Naive thymus-derived CD4-positive, alpha-beta T cell (primary cell): ENCODE measurements at regions of chr1 and their contacts with region 1.

Region 1: DNA sequence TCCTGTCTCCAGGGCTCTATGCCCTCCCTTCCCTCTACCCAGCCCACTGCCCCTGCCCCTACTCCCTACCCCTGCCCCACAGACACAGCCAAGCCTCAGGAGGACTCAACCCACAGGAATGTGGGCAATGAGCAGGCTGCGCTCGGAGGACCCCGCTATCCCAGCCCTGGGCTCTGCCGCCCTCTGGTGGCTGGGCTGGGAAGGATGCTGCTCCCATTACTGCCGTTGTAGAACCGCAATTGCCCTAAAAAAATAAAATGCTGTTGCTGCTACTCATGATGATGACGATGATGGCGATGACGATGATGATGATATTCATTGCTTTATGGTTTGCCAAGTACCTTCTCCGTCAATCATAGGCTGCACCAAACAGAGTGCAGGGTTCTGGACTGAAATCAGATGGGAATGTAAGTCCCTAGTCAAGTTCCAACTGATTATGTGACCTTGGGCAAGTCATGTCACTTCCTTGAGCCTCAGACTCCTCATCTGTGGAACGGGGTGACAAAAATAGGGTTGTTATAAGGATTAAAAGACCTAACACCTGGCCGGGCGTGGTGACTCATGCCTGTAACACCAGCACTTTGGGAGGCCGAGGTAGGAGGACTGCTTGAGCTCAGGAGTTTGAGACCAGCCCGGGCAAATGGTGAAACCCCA is 24.6 kb downstream of the ARHGEF19 start:
- DNase-seq: peak; percentile 59 to 87 (median 75)
- ATAC-seq: peak; percentile 94
- H3K4me3 ChIP-seq: no peak overlapping the region
- H3K4me3 Mint-ChIP-seq: no peak overlapping the region
- H3K27ac ChIP-seq: no peak overlapping the region
- H3K27ac Mint-ChIP-seq: no peak overlapping the region
- H3K4me1 ChIP-seq: peaks cover 0 to 4% of the 10 kb centered on the region in 2 donors
- H3K4me1 Mint-ChIP-seq: peaks cover 0 to 7% (median 0%) of the 10 kb centered on the region in 7 donors
- H3K27me3 ChIP-seq: no peaks in the 10 kb centered on the region
- H3K27me3 Mint-ChIP-seq: peaks cover 0 to 13% (median 0%) of the 10 kb centered on the region in 5 donors

Region 2: DNA sequence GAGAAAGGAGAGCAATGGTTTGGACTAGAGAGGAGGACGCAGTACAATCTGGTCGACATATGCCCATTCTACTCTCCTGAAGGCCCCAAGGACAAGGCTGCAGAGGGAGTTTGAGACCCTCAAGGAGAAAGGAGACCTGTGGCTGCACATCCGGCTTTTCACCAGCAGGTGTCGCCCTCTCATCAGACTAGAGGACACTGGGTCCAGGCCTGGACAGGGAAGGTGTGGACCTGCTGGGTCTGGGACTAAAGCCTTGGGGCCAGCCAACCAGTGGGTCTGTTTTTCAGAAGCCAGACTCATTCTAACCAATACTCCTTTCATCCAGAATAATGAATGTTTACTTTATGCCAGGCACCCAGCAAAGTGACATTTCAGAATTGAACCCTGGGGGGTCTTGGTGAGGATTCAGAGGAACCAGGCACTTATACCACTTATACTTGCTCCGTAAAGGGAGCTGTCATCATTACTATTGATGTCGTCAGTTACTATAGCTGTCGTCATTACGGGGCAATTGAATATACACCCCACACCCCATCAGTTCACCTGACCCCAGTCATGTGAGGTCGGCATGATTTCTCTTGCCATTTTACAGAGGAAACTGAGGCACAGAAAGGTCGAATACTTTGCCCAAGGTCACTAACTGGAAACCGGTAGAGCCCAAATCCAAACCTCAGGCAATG is 178.7 kb before region 1 on chr1:
- CTCF ChIA-PET with region 1: interaction called, 4 read pairs
- POLR2A ChIA-PET with region 1: no interaction called
- intact Hi-C with region 1: loop called in 1 of 2 experiments (anchors 1 kb)
- DNase-seq: peak; percentile 33 to 74 (median 54)
- ATAC-seq: peak; percentile 73
- H3K4me3 ChIP-seq: no peak overlapping the region
- H3K4me3 Mint-ChIP-seq: no peak overlapping the region
- H3K27ac ChIP-seq: no peak overlapping the region
- H3K27ac Mint-ChIP-seq: no peak overlapping the region
- H3K4me1 ChIP-seq: peaks cover 0 to 6% of the 10 kb centered on the region in 2 donors
- H3K4me1 Mint-ChIP-seq: peaks cover 0 to 21% (median 5%) of the 10 kb centered on the region in 7 donors
- H3K27me3 ChIP-seq: no peaks in the 10 kb centered on the region
- H3K27me3 Mint-ChIP-seq: peaks cover 0 to 17% (median 0%) of the 10 kb centered on the region in 5 donors

Region 3: GRCh38 chr1:16078925-16079656 is 108.8 kb before region 1 on chr1:
- CTCF ChIA-PET with region 1: interaction called, 240 read pairs
- POLR2A ChIA-PET with region 1: interaction called, 3 read pairs
- intact Hi-C with region 1: loop called (anchors 1 kb)
- DNase-seq: peak; percentile 52 to 80 (median 73)
- ATAC-seq: peak; percentile 91
- H3K4me3 ChIP-seq: peak overlapping the region; percentile 40
- H3K4me3 Mint-ChIP-seq: peak overlapping the region; percentile 58 to 86 (median 77)
- H3K27ac ChIP-seq: no peak overlapping the region
- H3K27ac Mint-ChIP-seq: peak overlapping the region in 6 of 9 donors; percentile 10 to 83 (median 40)
- H3K4me1 ChIP-seq: peaks cover 6% of the 10 kb centered on the region in 2 donors
- H3K4me1 Mint-ChIP-seq: peaks cover 6 to 15% (median 10%) of the 10 kb centered on the region in 7 donors
- H3K27me3 ChIP-seq: peaks cover 0 to 4% of the 10 kb centered on the region in 2 donors
- H3K27me3 Mint-ChIP-seq: peaks cover under 1 to 12% (median 5%) of the 10 kb centered on the region in 5 donors

Region 4: GRCh38 chr1:16155532-16156410 is 32.1 kb before region 1 on chr1 and contains the start of gene EPHA2:
- CTCF ChIA-PET with region 1: interaction called, 8 read pairs
- POLR2A ChIA-PET with region 1: interaction called, 9 read pairs
- intact Hi-C with region 1: loop called in 1 of 2 experiments (anchors 2 kb)
- DNase-seq: no peak
- ATAC-seq: peak; percentile 20
- H3K4me3 ChIP-seq: peak within 1 kb of the TSS; percentile 51
- H3K4me3 Mint-ChIP-seq: peak within 1 kb of the TSS; percentile 33 to 86 (median 73)
- H3K27ac ChIP-seq: no peak within 1 kb of the TSS
- H3K27ac Mint-ChIP-seq: peak within 1 kb of the TSS in 6 of 9 donors; percentile 46 to 93 (median 70)
- H3K4me1 ChIP-seq: peaks cover 24 to 38% of the 10 kb centered on the region in 2 donors
- H3K4me1 Mint-ChIP-seq: peaks cover 27 to 80% (median 55%) of the 10 kb centered on the region in 7 donors
- H3K27me3 ChIP-seq: no peaks in the 10 kb centered on the region
- H3K27me3 Mint-ChIP-seq: peaks cover 0 to 61% (median 3%) of the 10 kb centered on the region in 5 donors
- total RNA-seq, gene EPHA2: 0.59 to 0.61 TPM in 2 of 5 experiments, not detected in the others

Region 5: GRCh38 chr1:16243936-16244649 is 56.2 kb after region 1 on chr1:
- CTCF ChIA-PET with region 1: interaction called, 5 read pairs
- POLR2A ChIA-PET with region 1: interaction called, 4 read pairs
- intact Hi-C with region 1: loop called (anchors 1 kb)
- DNase-seq: peak; percentile 38 to 77 (median 68)
- ATAC-seq: peak; percentile 94
- H3K4me3 ChIP-seq: no peak overlapping the region
- H3K4me3 Mint-ChIP-seq: no peak overlapping the region
- H3K27ac ChIP-seq: no peak overlapping the region
- H3K27ac Mint-ChIP-seq: peak overlapping the region in 4 of 9 donors; percentile 21 to 92 (median 65)
- H3K4me1 ChIP-seq: peaks cover 0 to 5% of the 10 kb centered on the region in 2 donors
- H3K4me1 Mint-ChIP-seq: peaks cover 9 to 21% (median 17%) of the 10 kb centered on the region in 7 donors
- H3K27me3 ChIP-seq: no peaks in the 10 kb centered on the region
- H3K27me3 Mint-ChIP-seq: no peaks in the 10 kb centered on the region